GM12878 (cell line): ENCODE measurements at regions of chr1 and their contacts with region 1.

Region 1: GRCh38 chr1:236759252-236759859 is 35.7 kb upstream of the MTR start:
- DNase-seq: peak; percentile 7
- ATAC-seq: peak; percentile 78
- H3K4me3 ChIP-seq: no peak overlapping the region
- H3K27ac ChIP-seq: no peak overlapping the region
- H3K4me1 ChIP-seq: no peaks in the 10 kb centered on the region
- H3K27me3 ChIP-seq: no peaks in the 10 kb centered on the region
- CTCF ChIP-seq: peak; percentile 61 to 78 (median 68)
- EP300 ChIP-seq: no peak
- POLR2A ChIP-seq: no peak
- RAD21 ChIP-seq: peak; percentile 56

Region 2: DNA sequence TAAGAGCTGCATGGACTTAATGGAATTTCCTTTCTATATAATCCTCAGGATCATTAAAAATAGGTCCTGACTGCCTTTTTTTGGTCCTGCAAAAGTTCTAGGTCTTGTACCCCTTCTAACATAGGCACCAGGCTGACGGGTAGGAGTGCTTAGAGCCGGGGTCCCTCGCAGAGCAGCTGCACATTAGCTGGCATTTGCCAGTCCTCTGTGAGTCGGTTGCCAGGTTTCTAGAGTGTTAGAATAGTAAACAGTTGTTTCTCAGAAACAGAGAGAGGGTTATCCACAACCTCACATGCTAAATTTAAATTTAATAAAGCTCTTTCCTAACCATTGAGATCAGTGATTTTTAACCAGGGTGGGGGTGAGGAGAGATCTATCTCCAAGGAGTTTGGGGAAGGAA is 119.7 kb before region 1 on chr1:
- CTCF ChIA-PET with region 1: no interaction called
- POLR2A ChIA-PET with region 1: no interaction called
- RAD21 ChIA-PET with region 1: no interaction called
- SMC1A ChIA-PET with region 1: no interaction called
- in situ Hi-C with region 1: no loop called
- intact Hi-C with region 1: no loop called
- DNase-seq: no peak
- ATAC-seq: no peak
- H3K4me3 ChIP-seq: no peak overlapping the region
- H3K27ac ChIP-seq: no peak overlapping the region
- H3K4me1 ChIP-seq: no peaks in the 10 kb centered on the region
- H3K27me3 ChIP-seq: 0 out of 4 replicates have a peak, but pooled peaks cover 0 to 1% of the 10 kb centered on the region in 2 experiments
- CTCF ChIP-seq: no peak
- EP300 ChIP-seq: no peak
- POLR2A ChIP-seq: no peak
- RAD21 ChIP-seq: no peak

Region 3: DNA sequence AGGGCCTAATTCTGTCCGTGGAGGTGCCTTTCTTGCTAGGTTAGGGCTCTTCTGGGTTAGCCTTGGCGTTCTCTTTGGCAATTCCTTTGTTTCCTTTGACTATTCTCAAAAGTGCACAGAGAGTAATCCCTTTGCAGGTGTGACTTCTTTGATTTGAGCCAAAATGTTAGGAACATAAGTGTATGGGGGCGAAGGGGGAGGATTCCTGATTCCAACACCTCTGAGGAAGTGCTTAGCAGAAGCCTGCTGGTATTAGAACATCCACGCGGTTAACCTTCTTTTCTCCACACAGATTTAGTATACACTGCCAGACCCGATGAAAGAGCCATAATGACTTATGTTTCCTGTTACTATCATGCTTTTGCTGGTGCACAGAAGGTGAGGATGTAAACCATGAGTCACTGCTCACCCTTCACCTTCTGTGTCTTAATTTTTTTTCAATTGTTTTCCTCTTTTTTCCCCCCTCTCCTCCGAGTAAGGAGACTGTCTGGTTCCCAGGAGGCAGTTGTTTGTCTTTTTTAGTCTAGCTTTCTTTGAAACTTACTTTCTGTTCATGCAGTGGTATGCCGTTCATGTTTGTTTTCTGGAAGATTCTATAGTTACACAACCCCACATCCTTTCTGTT is 25.1 kb before region 1 on chr1:
- CTCF ChIA-PET with region 1: interaction called, 12 read pairs
- POLR2A ChIA-PET with region 1: no interaction called
- RAD21 ChIA-PET with region 1: no interaction called
- SMC1A ChIA-PET with region 1: no interaction called
- in situ Hi-C with region 1: no loop called
- intact Hi-C with region 1: no loop called
- DNase-seq: no peak
- ATAC-seq: peak; percentile 61
- H3K4me3 ChIP-seq: no peak overlapping the region
- H3K27ac ChIP-seq: no peak overlapping the region
- H3K4me1 ChIP-seq: peaks cover 3% of the 10 kb centered on the region
- H3K27me3 ChIP-seq: no peaks in the 10 kb centered on the region
- CTCF ChIP-seq: no peak
- EP300 ChIP-seq: no peak
- POLR2A ChIP-seq: no peak
- RAD21 ChIP-seq: no peak

Region 4: GRCh38 chr1:236795035-236795756 is 35.8 kb after region 1 on chr1 and contains the start of gene MTR:
- CTCF ChIA-PET with region 1: interaction called, 10 read pairs
- POLR2A ChIA-PET with region 1: no interaction called
- RAD21 ChIA-PET with region 1: interaction called, 4 read pairs
- SMC1A ChIA-PET with region 1: interaction called, 6 read pairs
- in situ Hi-C with region 1: no loop called
- intact Hi-C with region 1: no loop called
- DNase-seq: peak; percentile 89
- ATAC-seq: peak; percentile 97
- H3K4me3 ChIP-seq: peak within 1 kb of the TSS; percentile 97
- H3K27ac ChIP-seq: peak within 1 kb of the TSS; percentile 95
- H3K4me1 ChIP-seq: peaks cover 3% of the 10 kb centered on the region
- H3K27me3 ChIP-seq: no peaks in the 10 kb centered on the region
- CTCF ChIP-seq: no peak
- EP300 ChIP-seq: no peak
- POLR2A ChIP-seq: peak; percentile 90
- RAD21 ChIP-seq: no peak
- polyA plus RNA-seq, gene MTR: 2.4 to 5.3 TPM

Region 5: GRCh38 chr1:236868625-236869467 is 109.5 kb after region 1 on chr1:
- CTCF ChIA-PET with region 1: interaction called, 35 read pairs
- POLR2A ChIA-PET with region 1: no interaction called
- RAD21 ChIA-PET with region 1: interaction called, 4 read pairs
- SMC1A ChIA-PET with region 1: interaction called, 12 read pairs
- in situ Hi-C with region 1: loop called (anchors 5 kb)
- intact Hi-C with region 1: loop called (anchors 2 kb)
- DNase-seq: peak; percentile 17
- ATAC-seq: peak; percentile 97
- H3K4me3 ChIP-seq: no peak overlapping the region
- H3K27ac ChIP-seq: no peak overlapping the region
- H3K4me1 ChIP-seq: no peaks in the 10 kb centered on the region
- H3K27me3 ChIP-seq: no peaks in the 10 kb centered on the region
- CTCF ChIP-seq: peak; percentile 84 to 94 (median 90)
- EP300 ChIP-seq: no peak
- POLR2A ChIP-seq: no peak
- RAD21 ChIP-seq: peak; percentile 67

Region 6: GRCh38 chr1:236888903-236889302 is 129.5 kb after region 1 on chr1:
- CTCF ChIA-PET with region 1: no interaction called
- POLR2A ChIA-PET with region 1: no interaction called
- RAD21 ChIA-PET with region 1: no interaction called
- SMC1A ChIA-PET with region 1: no interaction called
- in situ Hi-C with region 1: no loop called
- intact Hi-C with region 1: no loop called
- DNase-seq: no peak
- ATAC-seq: no peak
- H3K4me3 ChIP-seq: no peak overlapping the region
- H3K27ac ChIP-seq: no peak overlapping the region
- H3K4me1 ChIP-seq: no peaks in the 10 kb centered on the region
- H3K27me3 ChIP-seq: no peaks in the 10 kb centered on the region
- CTCF ChIP-seq: no peak
- EP300 ChIP-seq: no peak
- POLR2A ChIP-seq: no peak
- RAD21 ChIP-seq: no peak

Region 7: GRCh38 chr1:236957221-236957620 is 197.9 kb after region 1 on chr1:
- CTCF ChIA-PET with region 1: no interaction called
- POLR2A ChIA-PET with region 1: no interaction called
- RAD21 ChIA-PET with region 1: no interaction called
- SMC1A ChIA-PET with region 1: no interaction called
- in situ Hi-C with region 1: no loop called
- intact Hi-C with region 1: no loop called
- DNase-seq: no peak
- ATAC-seq: no peak
- H3K4me3 ChIP-seq: no peak overlapping the region
- H3K27ac ChIP-seq: no peak overlapping the region
- H3K4me1 ChIP-seq: no peaks in the 10 kb centered on the region
- H3K27me3 ChIP-seq: peaks cover 0 to 2% of the 10 kb centered on the region in 2 experiments; a peak in 1 of 4 replicates
- CTCF ChIP-seq: no peak
- EP300 ChIP-seq: no peak
- POLR2A ChIP-seq: no peak
- RAD21 ChIP-seq: no peak

Region 8: DNA sequence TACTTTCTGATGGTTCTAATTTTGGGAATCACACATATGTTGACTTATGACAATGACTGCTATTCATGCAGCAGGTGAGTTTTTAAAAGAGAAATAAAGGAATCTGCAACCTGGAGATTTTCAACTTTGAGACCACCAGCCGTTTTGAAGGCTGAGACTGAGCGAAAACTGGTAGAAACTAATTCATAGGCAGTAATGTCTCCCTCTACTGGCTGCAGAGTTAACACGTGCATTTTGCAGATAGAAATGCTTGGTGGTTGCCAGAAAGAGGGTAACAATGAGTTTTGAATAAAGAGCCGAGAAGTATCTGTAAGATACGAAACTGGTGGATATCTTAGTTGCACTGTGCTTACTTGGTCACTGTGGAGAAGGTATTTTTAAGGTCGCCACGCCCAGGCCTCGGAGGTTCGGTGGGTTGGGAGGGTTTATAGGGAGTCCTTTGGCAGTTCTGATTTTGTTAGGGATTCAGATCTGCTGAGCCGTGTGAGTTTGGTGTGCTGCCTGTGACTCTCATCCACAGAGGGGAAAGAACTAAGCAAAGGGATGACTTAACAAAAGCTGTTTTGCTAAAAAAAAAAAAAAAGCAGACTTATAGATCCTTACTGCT is 365.6 kb after region 1 on chr1:
- CTCF ChIA-PET with region 1: no interaction called
- POLR2A ChIA-PET with region 1: no interaction called
- RAD21 ChIA-PET with region 1: no interaction called
- SMC1A ChIA-PET with region 1: no interaction called
- in situ Hi-C with region 1: no loop called
- intact Hi-C with region 1: loop called (anchors 10 kb)
- DNase-seq: no peak
- ATAC-seq: peak; percentile 65
- H3K4me3 ChIP-seq: no peak overlapping the region
- H3K27ac ChIP-seq: no peak overlapping the region
- H3K4me1 ChIP-seq: no peaks in the 10 kb centered on the region
- H3K27me3 ChIP-seq: no peaks in the 10 kb centered on the region
- CTCF ChIP-seq: peak; percentile 51 to 63 (median 53); a peak in 5 of 6 replicates
- EP300 ChIP-seq: no peak
- POLR2A ChIP-seq: no peak
- RAD21 ChIP-seq: 0 out of 2 replicates have a peak, but pooled peaks have one; percentile 17

Region 9: DNA sequence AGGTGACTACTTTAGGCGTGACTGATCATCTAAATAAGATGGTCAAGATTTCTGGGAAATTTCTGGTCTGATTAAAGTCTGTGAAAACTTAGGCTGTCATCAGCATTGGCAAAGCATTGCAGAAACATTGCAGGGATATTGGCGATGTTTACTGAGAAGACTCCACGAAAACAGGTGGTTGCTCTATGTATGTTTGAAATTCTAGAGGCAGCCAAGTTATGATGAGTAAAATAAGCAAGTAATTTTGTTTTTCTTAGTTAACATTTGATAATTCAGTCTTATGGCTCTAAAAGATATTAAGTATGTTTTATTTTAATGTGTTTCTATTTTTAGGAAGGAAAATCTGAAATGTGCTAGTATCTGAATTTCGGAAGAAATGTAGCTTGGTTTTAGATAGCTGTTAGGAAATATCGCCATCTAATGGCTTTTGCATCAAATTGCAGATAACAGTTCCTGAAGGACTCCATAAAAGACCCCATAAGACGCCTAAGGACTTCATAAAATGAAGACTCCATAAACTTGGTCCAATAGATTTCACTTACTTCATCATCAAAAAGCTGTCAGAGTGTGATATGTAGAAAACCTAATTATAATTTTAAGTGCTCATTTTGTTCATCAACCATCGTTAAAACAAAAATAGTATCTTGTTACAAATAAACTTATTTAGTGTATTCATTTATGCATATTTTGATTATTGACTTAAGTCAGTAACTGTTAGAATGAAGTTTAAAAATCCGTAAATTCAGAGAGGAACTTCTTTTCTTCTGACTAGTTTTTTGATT is 627.2 kb after region 1 on chr1:
- CTCF ChIA-PET with region 1: interaction called, 45 read pairs
- POLR2A ChIA-PET with region 1: no interaction called
- RAD21 ChIA-PET with region 1: interaction called, 19 read pairs
- SMC1A ChIA-PET with region 1: interaction called, 3 read pairs
- in situ Hi-C with region 1: loop called (anchors 10 kb)
- intact Hi-C with region 1: no loop called
- DNase-seq: no peak
- ATAC-seq: peak; percentile 58
- H3K4me3 ChIP-seq: no peak overlapping the region
- H3K27ac ChIP-seq: no peak overlapping the region
- H3K4me1 ChIP-seq: no peaks in the 10 kb centered on the region
- H3K27me3 ChIP-seq: no peaks in the 10 kb centered on the region
- CTCF ChIP-seq: peak; percentile 46 to 61 (median 55); a peak in 5 of 6 replicates
- EP300 ChIP-seq: no peak
- POLR2A ChIP-seq: no peak
- RAD21 ChIP-seq: peak; percentile 63

Region 10: GRCh38 chr1:237562242-237562823 is 803.0 kb after region 1 on chr1:
- CTCF ChIA-PET with region 1: interaction called, 31 read pairs
- POLR2A ChIA-PET with region 1: no interaction called
- RAD21 ChIA-PET with region 1: interaction called, 7 read pairs
- SMC1A ChIA-PET with region 1: interaction called, 6 read pairs
- in situ Hi-C with region 1: loop called (anchors 10 kb)
- intact Hi-C with region 1: loop called (anchors 10 kb)
- DNase-seq: peak; percentile 4
- ATAC-seq: peak; percentile 93
- H3K4me3 ChIP-seq: no peak overlapping the region
- H3K27ac ChIP-seq: no peak overlapping the region
- H3K4me1 ChIP-seq: no peaks in the 10 kb centered on the region
- H3K27me3 ChIP-seq: no peaks in the 10 kb centered on the region
- CTCF ChIP-seq: peak; percentile 31 to 52 (median 52); a peak in 5 of 6 replicates
- EP300 ChIP-seq: no peak
- POLR2A ChIP-seq: no peak
- RAD21 ChIP-seq: peak; percentile 47